Ascending aorta (tissue), 2 donors: ENCODE measurements at regions of chr4 and their contacts with region 1.

Region 1: GRCh38 chr4:185134307-185134869 is 8.7 kb upstream of the SLC25A4 start:
- DNase-seq: no peak
- H3K4me3 ChIP-seq: no peak overlapping the region
- H3K27ac ChIP-seq: no peak overlapping the region
- H3K4me1 ChIP-seq: no peaks in the 10 kb centered on the region
- H3K27me3 ChIP-seq: no peaks in the 10 kb centered on the region
- CTCF ChIP-seq: peak; percentile 56 to 74 (median 74)

Region 2: GRCh38 chr4:185005216-185005819 is 129.1 kb before region 1 on chr4:
- intact Hi-C with region 1: loop called (anchors 10 kb)
- DNase-seq: peak; percentile 38 to 90
- H3K4me3 ChIP-seq: peak overlapping the region; percentile 16 to 48
- H3K27ac ChIP-seq: no peak overlapping the region
- H3K4me1 ChIP-seq: no peaks in the 10 kb centered on the region
- H3K27me3 ChIP-seq: no peaks in the 10 kb centered on the region
- CTCF ChIP-seq: peak; percentile 62 to 95 (median 95)

Region 3: GRCh38 chr4:185096032-185096653 is 38.2 kb before region 1 on chr4:
- intact Hi-C with region 1: loop called (anchors 5 kb)
- DNase-seq: no peak
- H3K4me3 ChIP-seq: no peak overlapping the region
- H3K27ac ChIP-seq: no peak overlapping the region
- H3K4me1 ChIP-seq: no peaks in the 10 kb centered on the region
- H3K27me3 ChIP-seq: no peaks in the 10 kb centered on the region
- CTCF ChIP-seq: peak; percentile 43 to 63 (median 45)